ENCODE measurements at regions of chr11 and their contacts with region 1.

Region 1: DNA sequence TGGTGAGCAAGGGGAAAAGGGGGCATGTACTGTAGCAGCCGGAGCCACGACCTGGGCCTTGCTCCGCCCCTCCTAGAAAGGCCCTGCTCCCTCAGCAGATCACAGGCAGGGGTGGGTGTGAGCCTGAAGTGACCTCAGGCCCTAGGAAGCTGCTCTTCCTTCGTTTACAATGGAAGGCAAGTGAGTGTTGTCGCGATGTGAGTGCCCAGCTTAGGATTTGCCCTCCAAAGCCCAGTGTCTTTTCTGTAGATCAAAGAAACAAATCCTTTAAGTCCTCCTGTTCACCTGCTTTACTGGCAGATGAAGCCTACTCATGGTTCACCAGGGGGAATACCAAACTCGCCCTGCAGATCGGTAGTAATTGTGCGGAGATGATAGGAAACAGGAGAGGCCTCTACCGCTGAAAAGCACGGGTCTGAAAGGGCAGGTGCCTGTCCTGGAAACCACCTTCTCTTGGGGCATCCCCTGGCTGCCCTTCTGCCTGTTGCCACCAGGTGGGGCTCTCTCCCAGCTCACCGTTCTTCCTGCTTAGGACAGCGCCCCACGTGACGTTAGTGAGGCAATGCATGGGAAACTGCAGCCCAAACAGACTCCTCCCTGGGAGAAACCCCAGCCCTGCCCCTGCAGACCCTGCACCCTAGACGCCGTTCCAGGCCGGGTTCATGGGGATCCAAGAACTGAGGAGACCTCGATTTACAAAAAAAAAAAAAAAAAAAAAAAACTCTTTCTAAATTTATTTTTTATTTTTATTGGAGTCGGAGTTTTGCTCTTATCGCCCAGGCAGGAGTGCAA is 45.9 kb upstream of the RAB1B start:
- DNase-seq: peak; percentile 86 to 90
- H3K4me3 ChIP-seq: no peak overlapping the region
- H3K27ac ChIP-seq: no peak overlapping the region
- H3K4me1 ChIP-seq: no peaks in the 10 kb centered on the region; the same call in 1 of the 2 replicates
- H3K27me3 ChIP-seq: no peaks in the 10 kb centered on the region
- CTCF ChIP-seq: peak; percentile 98

Region 2: GRCh38 chr11:64674774-64675173 is 1547.8 kb before region 1 on chr11:
- CTCF ChIA-PET with region 1: no interaction called
- POLR2A ChIA-PET with region 1: interaction called, 18 read pairs
- intact Hi-C with region 1: no loop called
- DNase-seq: no peak
- H3K4me3 ChIP-seq: no peak overlapping the region
- H3K27ac ChIP-seq: no peak overlapping the region
- H3K4me1 ChIP-seq: 0 out of 2 replicates have a peak, but pooled peaks cover 5% of the 10 kb centered on the region
- H3K27me3 ChIP-seq: peaks cover 87% of the 10 kb centered on the region
- CTCF ChIP-seq: no peak

Region 3: DNA sequence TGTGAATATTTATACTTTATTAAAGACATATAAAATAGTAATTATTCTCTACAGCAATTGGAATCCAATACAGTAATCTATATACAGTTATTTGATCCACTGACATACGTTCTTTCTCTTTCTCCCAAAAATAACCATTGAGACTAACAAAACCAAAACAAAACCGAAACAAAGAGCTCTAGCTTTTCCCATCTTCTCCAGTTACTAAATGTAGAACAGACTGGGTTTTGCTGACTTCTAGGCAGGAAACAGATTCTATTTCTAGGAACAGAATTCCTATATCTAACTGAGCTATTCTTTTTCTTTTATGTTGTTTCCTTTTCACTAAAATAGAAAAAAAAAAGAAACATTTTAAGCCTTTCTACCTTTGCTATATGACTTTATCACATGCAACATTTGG is 72.4 kb before region 1 on chr11:
- CTCF ChIA-PET with region 1: interaction called, 12 read pairs
- POLR2A ChIA-PET with region 1: interaction called, 11 read pairs
- intact Hi-C with region 1: no loop called
- DNase-seq: no peak
- H3K4me3 ChIP-seq: no peak overlapping the region
- H3K27ac ChIP-seq: no peak overlapping the region
- H3K4me1 ChIP-seq: no peaks in the 10 kb centered on the region
- H3K27me3 ChIP-seq: no peaks in the 10 kb centered on the region
- CTCF ChIP-seq: no peak

Region 4: GRCh38 chr11:66242095-66242765 is 19.7 kb after region 1 on chr11:
- CTCF ChIA-PET with region 1: interaction called, 12 read pairs
- POLR2A ChIA-PET with region 1: no interaction called
- intact Hi-C with region 1: no loop called
- DNase-seq: no peak
- H3K4me3 ChIP-seq: no peak overlapping the region
- H3K27ac ChIP-seq: no peak overlapping the region
- H3K4me1 ChIP-seq: no peaks in the 10 kb centered on the region
- H3K27me3 ChIP-seq: no peaks in the 10 kb centered on the region
- CTCF ChIP-seq: no peak

Region 5: GRCh38 chr11:66386171-66387069 is 163.9 kb after region 1 on chr11:
- CTCF ChIA-PET with region 1: interaction called, 5 read pairs
- POLR2A ChIA-PET with region 1: no interaction called
- intact Hi-C with region 1: loop called (anchors 5 kb)
- DNase-seq: peak; percentile 79 to 82
- H3K4me3 ChIP-seq: peak overlapping the region; percentile 37; the same call in 1 of the 2 replicates
- H3K27ac ChIP-seq: no peak overlapping the region
- H3K4me1 ChIP-seq: no peaks in the 10 kb centered on the region
- H3K27me3 ChIP-seq: peaks cover 6% of the 10 kb centered on the region; the same call in 1 of the 2 replicates
- CTCF ChIP-seq: peak; percentile 97

Region 6: GRCh38 chr11:66835768-66836405 is 613.3 kb after region 1 on chr11:
- CTCF ChIA-PET with region 1: no interaction called
- POLR2A ChIA-PET with region 1: no interaction called
- intact Hi-C with region 1: no loop called
- DNase-seq: no peak
- H3K4me3 ChIP-seq: no peak overlapping the region
- H3K27ac ChIP-seq: no peak overlapping the region
- H3K4me1 ChIP-seq: peaks cover 9% of the 10 kb centered on the region
- H3K27me3 ChIP-seq: no peaks in the 10 kb centered on the region
- CTCF ChIP-seq: no peak

Measured in PC-9 (cell line).